Right cardiac atrium (tissue), 5 donors: ENCODE measurements at regions of chr2 and their contacts with region 1.

Region 1: DNA sequence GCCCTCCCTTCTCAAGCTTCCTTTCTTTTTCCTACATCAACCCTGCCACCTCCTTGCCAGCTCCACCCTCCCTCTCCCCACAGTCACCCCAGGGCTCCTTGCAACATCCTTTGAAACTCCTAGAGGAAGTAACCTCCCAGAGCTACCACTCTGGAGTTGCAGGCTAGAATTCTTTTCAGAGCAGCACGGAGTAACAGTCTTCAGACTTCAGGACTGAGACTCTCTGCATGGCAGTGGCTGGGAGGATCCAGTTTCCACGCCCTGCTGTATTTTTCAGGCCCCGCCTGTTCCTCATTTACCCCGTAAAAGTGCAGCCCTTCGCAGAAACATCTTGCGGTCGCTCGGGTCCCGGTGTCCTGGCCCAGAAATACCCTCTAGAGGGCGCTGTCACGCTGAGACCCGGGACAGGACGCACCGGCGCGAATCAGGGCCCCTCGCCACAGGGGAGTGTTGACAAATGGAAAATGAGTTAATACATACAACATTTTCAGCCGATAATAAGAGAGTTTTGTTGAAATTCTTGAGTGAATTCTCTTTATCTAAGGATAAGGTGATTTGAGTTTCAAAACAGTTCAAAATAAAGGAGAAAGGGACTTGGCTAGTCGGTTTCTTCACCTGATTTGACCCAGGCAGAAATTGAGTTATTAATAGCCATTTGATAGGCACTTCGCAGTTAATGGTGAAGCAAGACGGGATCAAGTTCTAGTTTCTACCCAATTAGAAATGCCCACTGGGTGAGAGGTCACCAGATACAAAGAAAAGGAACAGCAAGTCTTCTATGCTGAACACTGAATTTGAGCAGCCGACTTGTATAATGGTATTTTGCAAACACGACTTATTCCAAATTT is 18.5 kb upstream of the NTSR2 start:
- DNase-seq: peak; percentile 85 to 93 (median 93)
- ATAC-seq: peak; percentile 81 to 89
- H3K4me3 ChIP-seq: peak overlapping the region; percentile 13
- H3K27ac ChIP-seq: peak overlapping the region; percentile 22
- H3K4me1 ChIP-seq: no peaks in the 10 kb centered on the region
- H3K27me3 ChIP-seq: no peaks in the 10 kb centered on the region

Region 2: GRCh38 chr2:11477994-11478393 is 210.5 kb before region 1 on chr2:
- intact Hi-C with region 1: loop called in 2 of 4 experiments (anchors 10 kb)
- DNase-seq: peak; percentile 88 to 96 (median 90)
- ATAC-seq: peak; percentile 53 to 69
- H3K4me3 ChIP-seq: no peak overlapping the region
- H3K27ac ChIP-seq: no peak overlapping the region
- H3K4me1 ChIP-seq: no peaks in the 10 kb centered on the region
- H3K27me3 ChIP-seq: no peaks in the 10 kb centered on the region

Region 3: DNA sequence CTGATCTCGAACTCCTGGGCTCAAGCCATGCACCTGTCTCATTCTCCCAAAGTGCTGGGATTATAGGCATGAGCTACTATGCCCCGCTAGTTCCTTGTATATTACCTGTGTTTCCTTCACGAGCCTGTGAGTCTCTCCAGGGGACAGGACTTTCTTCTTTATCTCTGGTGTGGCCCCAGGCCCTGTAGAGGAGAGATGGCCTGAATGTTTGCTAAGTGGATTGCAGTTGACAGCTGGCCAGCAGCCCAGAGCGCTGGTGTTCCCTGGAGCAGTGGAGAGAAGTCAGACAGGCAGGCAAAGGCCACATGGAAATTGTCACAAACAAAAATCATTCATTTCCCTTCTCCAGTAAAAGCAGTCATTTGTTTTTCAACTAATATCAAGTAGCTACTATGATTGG is 75.9 kb after region 1 on chr2:
- intact Hi-C with region 1: no loop called
- DNase-seq: peak; percentile 57 to 85 (median 85)
- ATAC-seq: peak; percentile 82 to 92
- H3K4me3 ChIP-seq: no peak overlapping the region
- H3K27ac ChIP-seq: no peak overlapping the region
- H3K4me1 ChIP-seq: peaks cover 5% of the 10 kb centered on the region
- H3K27me3 ChIP-seq: no peaks in the 10 kb centered on the region

Region 4: GRCh38 chr2:11778923-11779757 is 90.7 kb after region 1 on chr2:
- intact Hi-C with region 1: loop called in 3 of 4 experiments (anchors 2 to 5 kb)
- DNase-seq: peak; percentile 81 to 92 (median 91)
- ATAC-seq: peak; percentile 88 to 96
- H3K4me3 ChIP-seq: no peak overlapping the region
- H3K27ac ChIP-seq: no peak overlapping the region
- H3K4me1 ChIP-seq: no peaks in the 10 kb centered on the region
- H3K27me3 ChIP-seq: no peaks in the 10 kb centered on the region

Region 5: DNA sequence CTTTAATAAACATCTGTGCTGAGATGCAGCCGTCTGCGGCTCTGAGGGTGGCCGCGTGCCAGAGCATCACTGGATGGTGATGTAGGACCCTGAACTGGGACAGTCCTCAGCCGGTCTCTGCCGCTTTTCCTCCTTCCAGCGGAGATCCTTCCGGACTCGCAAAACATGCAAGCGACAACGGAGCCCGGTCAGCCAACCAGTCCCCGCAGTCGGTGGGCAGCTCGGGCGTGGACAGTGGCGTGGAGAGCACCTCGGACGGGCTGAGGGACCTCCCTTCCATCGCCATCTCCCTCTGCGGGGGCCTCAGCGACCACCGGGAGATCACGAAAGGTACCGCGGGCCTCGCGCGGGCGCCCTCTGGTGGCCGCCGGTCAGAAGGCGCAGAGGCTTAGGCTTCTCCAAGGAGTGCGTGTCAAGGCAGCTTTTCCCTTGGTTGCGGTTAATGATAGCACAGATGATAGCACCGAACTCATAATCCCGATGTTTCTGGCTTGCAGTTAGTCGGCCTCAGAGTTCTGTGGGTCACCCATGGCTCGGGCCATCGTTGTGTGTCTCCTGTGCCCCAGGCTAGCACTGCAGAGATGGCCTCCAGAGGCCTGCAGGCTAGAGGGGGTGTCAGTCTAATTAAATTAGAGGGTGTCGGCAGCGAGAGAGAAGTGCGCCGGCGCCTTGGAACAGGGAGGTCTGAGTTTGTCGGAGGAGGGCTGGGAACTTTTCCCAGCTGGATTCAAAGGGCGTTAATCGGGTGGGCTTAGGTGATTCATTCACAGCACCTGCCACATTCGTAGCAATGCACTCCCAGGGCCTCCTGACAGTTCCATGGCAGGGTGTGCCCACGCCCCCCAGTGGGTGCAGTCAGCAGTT is 96.5 kb after region 1 on chr2:
- intact Hi-C with region 1: loop called in 1 of 4 experiments (anchors 2 kb)
- DNase-seq: peak in 2 of 3 donors; percentile 76 to 80
- ATAC-seq: peak; percentile 59 to 79
- H3K4me3 ChIP-seq: peak overlapping the region; percentile 1
- H3K27ac ChIP-seq: no peak overlapping the region
- H3K4me1 ChIP-seq: no peaks in the 10 kb centered on the region
- H3K27me3 ChIP-seq: no peaks in the 10 kb centered on the region